ENCODE measurements at regions of chr18 and their contacts with region 1.

Region 1: DNA sequence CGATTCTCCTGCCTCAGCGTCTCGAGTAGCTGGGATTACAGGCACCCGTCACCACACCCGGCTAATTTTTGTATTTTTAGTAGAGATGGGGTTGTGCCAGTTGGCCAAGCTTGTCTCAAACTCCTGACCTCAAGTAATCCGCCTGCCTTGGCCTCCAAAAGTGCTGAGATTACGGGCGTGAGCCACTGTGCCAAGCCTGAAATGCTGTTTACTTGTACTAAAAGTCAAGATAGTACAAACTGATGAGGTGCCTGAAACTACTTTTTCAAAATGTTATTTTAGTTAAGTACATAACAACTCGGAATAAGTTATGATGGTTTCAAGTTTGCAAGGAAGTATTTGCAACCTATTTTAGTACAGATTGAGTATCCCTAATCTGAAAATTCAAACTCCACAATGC is 85.7 kb downstream of the CEP192 start:
- ATAC-seq: no peak
- H3K4me3 ChIP-seq: no peak overlapping the region
- H3K27ac ChIP-seq: no peak overlapping the region
- H3K4me1 ChIP-seq: no peaks in the 10 kb centered on the region

Region 2: GRCh38 chr18:12990967-12991838 is 85.7 kb before region 1 on chr18 and contains the start of gene CEP192:
- in situ Hi-C with region 1: loop called in 1 of 9 experiments (anchors 25 kb)
- ATAC-seq: peak; percentile 87 to 95 (median 93)
- H3K4me3 ChIP-seq: peak within 1 kb of the TSS; percentile 55 to 96 (median 87)
- H3K27ac ChIP-seq: peak within 1 kb of the TSS; percentile 81 to 89
- H3K4me1 ChIP-seq: peaks cover 4 to 7% of the 10 kb centered on the region in 2 donors
- total RNA-seq, gene CEP192: 12.0 to 31.6 (median 22.0) TPM

Region 3: GRCh38 chr18:13216092-13216582 is 139.3 kb after region 1 on chr18:
- in situ Hi-C with region 1: no loop called
- ATAC-seq: peak; percentile 25 to 55 (median 42)
- H3K4me3 ChIP-seq: peak overlapping the region in 2 of 5 donors; percentile 9 to 68
- H3K27ac ChIP-seq: no peak overlapping the region
- H3K4me1 ChIP-seq: peaks cover 0 to 2% of the 10 kb centered on the region in 2 donors